G401 (cell line): ENCODE measurements at regions of chr2 and their contacts with region 1.

Region 1: GRCh38 chr2:233349005-233349998 is 5.0 kb upstream of the DGKD start:
- DNase-seq: peak; percentile 25

Region 2: GRCh38 chr2:233289648-233290047 is 59.7 kb before region 1 on chr2:
- in situ Hi-C with region 1: loop called (anchors 5 kb)
- DNase-seq: no peak